ENCODE measurements at regions of chr18 and their contacts with region 1.

Region 1: DNA sequence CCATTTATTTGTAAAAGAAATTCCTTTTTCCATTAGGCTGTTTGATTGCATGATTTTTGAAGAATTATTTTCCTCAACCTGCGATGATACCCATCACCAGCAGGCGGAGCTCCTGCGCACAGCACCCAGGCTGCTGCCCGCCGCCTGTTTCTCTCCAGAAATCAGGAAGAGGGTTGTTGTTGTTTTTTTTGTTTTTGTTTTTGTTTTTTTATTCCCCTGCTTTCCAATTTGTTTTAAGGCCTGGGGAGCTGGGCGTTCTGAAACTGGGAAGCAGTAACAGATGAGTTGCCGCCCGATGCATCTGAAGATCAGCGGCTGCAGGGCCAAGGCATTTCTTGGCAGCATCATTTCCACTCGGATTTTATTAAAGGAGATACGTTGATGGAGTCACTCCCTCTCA is 132.1 kb downstream of the MBP start:
- ATAC-seq: peak in 3 of 8 experiments; percentile 37 to 40 (median 38)
- H3K4me3 ChIP-seq: no peak overlapping the region
- H3K27ac ChIP-seq: no peak overlapping the region
- H3K4me1 ChIP-seq: peaks cover 0 to 4% of the 10 kb centered on the region in 2 donors

Region 2: DNA sequence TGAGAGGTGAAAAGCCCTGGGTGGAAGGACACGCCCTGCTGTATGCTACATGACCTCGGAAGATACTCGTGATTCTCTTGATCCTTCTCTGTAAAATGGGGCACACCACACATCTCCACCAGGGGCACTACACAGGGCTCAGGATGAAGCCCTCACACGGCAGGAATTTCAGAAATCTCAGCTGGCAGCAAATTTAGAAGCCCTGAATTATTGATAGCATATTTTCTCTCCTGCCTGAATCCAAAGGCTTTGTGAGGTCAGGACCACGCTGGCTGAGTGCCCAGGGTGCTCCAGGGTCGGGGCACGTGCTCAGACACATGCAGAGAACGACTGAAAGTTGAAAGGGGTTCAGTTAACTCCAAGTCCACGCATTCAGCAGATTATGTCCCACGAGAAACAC is 207.0 kb after region 1 on chr18:
- in situ Hi-C with region 1: loop called in 1 of 9 experiments (anchors 25 kb)
- ATAC-seq: peak in 7 of 8 experiments; percentile 70 to 87 (median 74)
- H3K4me3 ChIP-seq: no peak overlapping the region
- H3K27ac ChIP-seq: no peak overlapping the region
- H3K4me1 ChIP-seq: peaks cover 5 to 7% of the 10 kb centered on the region in 2 donors